Mammary epithelial cell (primary cell): ENCODE measurements at regions of chr1 and their contacts with region 1.

Region 1: DNA sequence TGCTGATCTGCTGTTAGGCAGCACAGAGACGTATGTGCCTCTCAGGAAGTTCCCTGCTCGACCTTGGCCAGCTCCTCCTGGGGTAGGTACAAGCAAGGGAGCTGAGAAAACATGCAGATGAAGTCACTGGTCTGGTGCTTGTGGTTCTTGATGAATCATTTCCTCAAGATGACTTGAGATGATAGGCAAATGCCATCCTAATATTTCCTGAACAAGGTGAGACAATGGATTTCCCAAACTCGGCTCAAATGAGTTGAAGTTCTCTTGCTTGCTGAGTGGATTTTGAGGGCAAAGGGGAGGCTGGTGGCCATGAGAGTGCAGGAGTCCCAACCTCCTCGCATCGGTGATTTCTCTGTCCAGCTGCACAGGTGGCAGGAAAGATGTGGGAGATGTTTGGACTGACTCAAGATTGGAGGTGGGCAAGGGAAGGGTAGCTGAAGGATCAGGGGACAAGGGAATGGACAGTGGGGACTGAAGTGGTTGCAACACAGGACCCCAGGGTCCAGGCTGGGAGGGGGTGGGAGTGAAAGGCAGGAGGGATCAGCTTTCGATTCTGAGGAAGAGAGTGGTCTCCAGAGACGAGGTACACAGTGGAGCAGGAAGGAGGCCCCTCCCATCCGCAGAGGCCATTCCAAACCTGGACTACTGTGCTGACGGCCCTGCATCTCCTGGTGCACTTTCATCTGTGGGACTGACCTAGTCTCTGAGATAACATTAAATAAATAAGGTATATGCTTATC is 63.9 kb downstream of the CAPN2 start:
- DNase-seq: peak; percentile 94
- H3K4me3 ChIP-seq: no peak overlapping the region
- H3K27ac ChIP-seq: peak overlapping the region; percentile 40
- H3K4me1 ChIP-seq: peaks cover 40% of the 10 kb centered on the region
- H3K27me3 ChIP-seq: no peaks in the 10 kb centered on the region
- CTCF ChIP-seq: no peak

Region 2: GRCh38 chr1:223819730-223820514 is 43.7 kb after region 1 on chr1:
- CTCF ChIA-PET with region 1: no interaction called
- dilution Hi-C with region 1: loop called (anchors 5 kb)
- in situ Hi-C with region 1: no loop called
- intact Hi-C with region 1: no loop called
- DNase-seq: no peak
- H3K4me3 ChIP-seq: no peak overlapping the region
- H3K27ac ChIP-seq: no peak overlapping the region
- H3K4me1 ChIP-seq: peaks cover 12% of the 10 kb centered on the region
- H3K27me3 ChIP-seq: no peaks in the 10 kb centered on the region
- CTCF ChIP-seq: no peak

Region 3: GRCh38 chr1:223845810-223846682 is 69.8 kb after region 1 on chr1 and contains the start of gene TP53BP2:
- CTCF ChIA-PET with region 1: no interaction called
- dilution Hi-C with region 1: no loop called
- in situ Hi-C with region 1: no loop called
- intact Hi-C with region 1: loop called (anchors 5 kb)
- DNase-seq: peak; percentile 86
- H3K4me3 ChIP-seq: peak within 1 kb of the TSS; percentile 82 to 98 (median 90)
- H3K27ac ChIP-seq: peak within 1 kb of the TSS; percentile 94
- H3K4me1 ChIP-seq: peaks cover 15% of the 10 kb centered on the region
- H3K27me3 ChIP-seq: no peaks in the 10 kb centered on the region
- CTCF ChIP-seq: peak; percentile 35 to 76
- total RNA-seq, gene TP53BP2: 13.7 to 19.4 TPM